Activated CD4-positive, alpha-beta T cell treated with anti-CD3 and anti-CD28 coated beads for 36 hours (primary cell): ENCODE measurements at regions of chr14 and their contacts with region 1.

Region 1: DNA sequence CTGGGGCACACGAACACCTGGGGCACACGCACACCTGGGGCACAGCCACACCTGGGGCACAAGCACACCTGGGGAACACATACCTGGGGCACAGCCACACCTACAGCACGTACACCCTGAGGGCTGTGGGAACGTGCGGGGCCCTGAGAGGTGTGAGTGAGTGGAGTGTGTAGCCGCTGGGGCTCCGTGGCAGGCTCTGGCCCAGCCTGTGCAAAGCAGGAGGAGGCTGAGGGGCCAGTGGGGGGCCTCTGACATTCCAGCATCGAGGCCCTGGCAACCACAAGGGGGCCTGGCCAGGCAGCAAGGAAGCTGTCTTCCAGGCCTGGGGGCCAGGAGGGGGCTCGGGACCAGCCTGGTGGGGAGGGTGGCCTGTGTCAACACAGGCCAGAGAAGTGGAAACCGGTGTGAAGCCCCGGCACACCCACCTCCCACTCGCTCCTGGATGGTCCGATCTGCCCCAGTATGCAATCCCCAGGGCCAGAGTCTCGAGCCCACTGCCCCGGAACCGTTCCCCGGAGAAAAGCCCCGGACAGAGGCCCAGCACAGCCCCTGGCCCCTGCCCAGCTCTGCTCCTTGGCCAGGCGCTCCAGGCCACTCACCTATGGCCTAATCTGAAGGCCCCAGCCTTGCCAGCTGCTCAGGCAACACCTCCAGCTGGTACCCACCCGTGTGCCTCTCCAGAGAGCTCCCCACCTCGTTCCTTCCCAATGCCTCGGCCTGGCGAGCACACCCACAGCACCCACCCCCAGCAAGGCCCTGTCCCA is 17.9 kb downstream of the AKT1 start:
- DNase-seq: no peak
- ATAC-seq: no peak
- H3K4me3 Mint-ChIP-seq: no peak overlapping the region
- H3K27ac Mint-ChIP-seq: no peak overlapping the region
- H3K4me1 Mint-ChIP-seq: no peaks in the 10 kb centered on the region
- H3K27me3 Mint-ChIP-seq: no peaks in the 10 kb centered on the region

Region 2: GRCh38 chr14:104800015-104800770 is 22.5 kb after region 1 on chr14:
- CTCF ChIA-PET with region 1: no interaction called
- POLR2A ChIA-PET with region 1: no interaction called
- intact Hi-C with region 1: loop called in 1 of 2 experiments (anchors 2 kb)
- DNase-seq: peak; percentile 88
- ATAC-seq: peak; percentile 77
- H3K4me3 Mint-ChIP-seq: peak overlapping the region; percentile 49
- H3K27ac Mint-ChIP-seq: no peak overlapping the region
- H3K4me1 Mint-ChIP-seq: peaks cover 22% of the 10 kb centered on the region
- H3K27me3 Mint-ChIP-seq: no peaks in the 10 kb centered on the region

Region 3: GRCh38 chr14:105012171-105012985 is 234.7 kb after region 1 on chr14:
- CTCF ChIA-PET with region 1: no interaction called
- POLR2A ChIA-PET with region 1: no interaction called
- intact Hi-C with region 1: no loop called
- DNase-seq: no peak
- ATAC-seq: no peak
- H3K4me3 Mint-ChIP-seq: no peak overlapping the region
- H3K27ac Mint-ChIP-seq: no peak overlapping the region
- H3K4me1 Mint-ChIP-seq: peaks cover 34% of the 10 kb centered on the region
- H3K27me3 Mint-ChIP-seq: no peaks in the 10 kb centered on the region

Region 4: GRCh38 chr14:105197271-105197670 is 419.6 kb after region 1 on chr14:
- CTCF ChIA-PET with region 1: no interaction called
- POLR2A ChIA-PET with region 1: no interaction called
- intact Hi-C with region 1: no loop called
- DNase-seq: peak; percentile 48
- ATAC-seq: peak; percentile 11
- H3K4me3 Mint-ChIP-seq: no peak overlapping the region
- H3K27ac Mint-ChIP-seq: no peak overlapping the region
- H3K4me1 Mint-ChIP-seq: peaks cover 34% of the 10 kb centered on the region
- H3K27me3 Mint-ChIP-seq: peaks cover 32% of the 10 kb centered on the region